ENCODE measurements at regions of chr3 and their contacts with region 1.

Region 1: GRCh38 chr3:57555738-57556458 is at the start of gene PDE12:
- DNase-seq: peak; percentile 90
- H3K4me3 ChIP-seq: peak within 1 kb of the TSS; percentile 61 to 91 (median 76)
- H3K27ac ChIP-seq: peak within 1 kb of the TSS; percentile 90 to 95 (median 92)
- H3K4me1 ChIP-seq: peaks cover 19 to 31% (median 22%) of the 10 kb centered on the region in 4 donors
- H3K27me3 ChIP-seq: no peaks in the 10 kb centered on the region
- CTCF ChIP-seq: no peak
- EP300 ChIP-seq: no peak
- POLR2A ChIP-seq: peak; percentile 92
- total RNA-seq, gene PDE12: 4.2 to 34.8 (median 19.3) TPM

Region 2: DNA sequence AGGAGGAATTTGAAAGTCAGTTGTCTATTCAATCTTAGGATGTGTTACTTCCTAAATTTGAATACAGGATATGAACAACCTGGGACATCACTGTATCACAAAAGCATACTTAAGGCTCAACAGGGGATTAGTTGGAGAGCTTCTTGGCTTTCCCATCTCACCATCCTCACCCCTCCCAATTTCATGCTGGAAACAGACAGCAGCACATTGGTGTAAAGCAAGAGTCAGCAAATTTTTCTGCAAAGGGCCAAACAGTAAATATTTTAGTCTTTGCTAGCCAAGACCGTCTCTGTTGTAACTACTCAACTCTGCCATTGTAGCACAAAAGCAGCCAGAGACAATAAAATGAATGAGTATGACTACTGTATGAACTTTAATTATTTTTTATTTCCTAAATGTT is 1182.5 kb before region 1 on chr3:
- in situ Hi-C with region 1: no loop called
- intact Hi-C with region 1: no loop called
- DNase-seq: no peak
- H3K4me3 ChIP-seq: no peak overlapping the region
- H3K27ac ChIP-seq: no peak overlapping the region
- H3K4me1 ChIP-seq: no peaks in the 10 kb centered on the region
- H3K27me3 ChIP-seq: no peaks in the 10 kb centered on the region
- CTCF ChIP-seq: no peak
- EP300 ChIP-seq: no peak
- POLR2A ChIP-seq: no peak

Region 3: DNA sequence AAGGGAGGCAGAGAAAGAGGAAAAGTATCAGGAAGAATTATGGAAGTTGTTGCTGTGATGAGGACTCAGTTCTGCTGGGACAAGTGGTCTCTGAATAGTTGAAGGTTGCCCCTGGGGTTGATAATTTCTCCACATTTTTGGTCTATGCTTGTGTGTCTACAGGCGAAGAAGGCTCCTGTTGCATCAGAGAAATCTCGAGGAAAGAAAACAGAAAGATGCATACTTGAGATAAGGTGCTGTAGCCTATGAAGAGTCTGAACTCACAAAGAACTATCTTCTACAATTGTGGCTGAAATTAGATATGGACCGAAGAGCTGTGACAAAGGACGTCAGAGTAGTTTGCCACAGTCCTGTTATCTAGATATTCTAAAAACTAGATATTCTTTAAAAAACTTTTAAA is 240.2 kb before region 1 on chr3:
- in situ Hi-C with region 1: no loop called
- intact Hi-C with region 1: no loop called
- DNase-seq: no peak
- H3K4me3 ChIP-seq: no peak overlapping the region
- H3K27ac ChIP-seq: no peak overlapping the region
- H3K4me1 ChIP-seq: no peaks in the 10 kb centered on the region
- H3K27me3 ChIP-seq: peaks cover 14% of the 10 kb centered on the region
- CTCF ChIP-seq: no peak
- EP300 ChIP-seq: no peak
- POLR2A ChIP-seq: no peak

Region 4: DNA sequence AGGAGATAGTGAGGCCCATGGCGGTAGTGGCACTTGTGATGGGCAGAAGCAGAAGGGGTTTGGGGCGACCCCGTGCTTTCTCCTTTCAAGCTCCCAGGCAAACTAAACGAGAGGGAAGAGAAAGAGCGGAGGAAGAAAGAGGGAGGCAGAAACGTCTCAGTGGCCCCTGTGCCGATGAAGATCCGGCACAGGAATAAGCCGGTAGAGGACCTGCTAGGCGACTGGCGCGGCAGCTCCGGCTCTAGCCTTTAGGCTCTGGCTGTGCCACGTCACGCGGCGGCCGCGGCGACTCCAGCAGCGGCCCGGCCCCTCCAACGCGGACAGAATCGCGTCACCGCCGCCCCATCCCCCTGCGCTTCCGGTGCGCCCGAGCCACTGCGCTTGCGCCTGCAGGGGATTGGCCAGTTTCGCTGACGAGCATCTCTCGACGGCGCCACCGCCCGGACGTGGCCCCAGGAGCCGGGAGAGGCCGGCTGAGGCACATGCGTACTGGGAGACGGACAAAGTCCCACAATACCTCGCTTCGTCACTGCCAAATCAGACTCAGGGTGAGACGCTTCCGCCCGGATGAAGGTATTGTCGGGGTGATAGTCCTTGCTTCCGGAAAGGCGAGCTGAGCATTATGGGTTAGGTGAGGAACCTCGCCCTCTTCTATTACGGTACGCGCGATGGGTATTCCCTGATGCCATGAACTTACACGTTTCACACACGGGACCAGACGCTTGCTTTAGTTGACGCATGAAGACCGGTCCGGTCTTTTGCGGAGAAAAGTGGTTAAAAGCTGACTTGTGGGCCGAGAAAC is 41.4 kb after region 1 on chr3 and contains the start of gene ARF4:
- in situ Hi-C with region 1: no loop called
- intact Hi-C with region 1: loop called (anchors 5 kb)
- DNase-seq: peak; percentile 100
- H3K4me3 ChIP-seq: peak within 1 kb of the TSS; percentile 72 to 94 (median 82)
- H3K27ac ChIP-seq: peak within 1 kb of the TSS; percentile 97 to 100 (median 100)
- H3K4me1 ChIP-seq: peaks cover 31 to 53% (median 42%) of the 10 kb centered on the region in 4 donors
- H3K27me3 ChIP-seq: no peaks in the 10 kb centered on the region
- CTCF ChIP-seq: peak in 1 of 5 experiments; percentile 18
- EP300 ChIP-seq: peak; percentile 62
- POLR2A ChIP-seq: peak; percentile 100
- total RNA-seq, gene ARF4: 89.6 to 109 (median 98.2) TPM

Measured in transverse colon (tissue), 4 donors.